ENCODE measurements at regions of chr10 and their contacts with region 1.

Region 1: GRCh38 chr10:22597138-22597537 is 117.2 kb downstream of the PIP4K2A start:
- H3K4me3 ChIP-seq: no peak overlapping the region
- H3K27ac ChIP-seq: no peak overlapping the region
- H3K4me1 ChIP-seq: peaks cover 25% of the 10 kb centered on the region
- CTCF ChIP-seq: no peak

Region 2: GRCh38 chr10:22534849-22535604 is 62.1 kb before region 1 on chr10:
- CTCF ChIA-PET with region 1: no interaction called
- POLR2A ChIA-PET with region 1: no interaction called
- H3K4me3 ChIP-seq: no peak overlapping the region
- H3K27ac ChIP-seq: no peak overlapping the region
- H3K4me1 ChIP-seq: peaks cover 13% of the 10 kb centered on the region
- CTCF ChIP-seq: no peak

Region 3: GRCh38 chr10:22580711-22581110 is 16.4 kb before region 1 on chr10:
- CTCF ChIA-PET with region 1: interaction called, 10 read pairs
- POLR2A ChIA-PET with region 1: interaction called, 7 read pairs
- H3K4me3 ChIP-seq: no peak overlapping the region
- H3K27ac ChIP-seq: no peak overlapping the region
- H3K4me1 ChIP-seq: no peaks in the 10 kb centered on the region
- CTCF ChIP-seq: no peak